Psoas muscle (tissue), 8 donors: ENCODE measurements at regions of chr12 and their contacts with region 1.

Region 1: DNA sequence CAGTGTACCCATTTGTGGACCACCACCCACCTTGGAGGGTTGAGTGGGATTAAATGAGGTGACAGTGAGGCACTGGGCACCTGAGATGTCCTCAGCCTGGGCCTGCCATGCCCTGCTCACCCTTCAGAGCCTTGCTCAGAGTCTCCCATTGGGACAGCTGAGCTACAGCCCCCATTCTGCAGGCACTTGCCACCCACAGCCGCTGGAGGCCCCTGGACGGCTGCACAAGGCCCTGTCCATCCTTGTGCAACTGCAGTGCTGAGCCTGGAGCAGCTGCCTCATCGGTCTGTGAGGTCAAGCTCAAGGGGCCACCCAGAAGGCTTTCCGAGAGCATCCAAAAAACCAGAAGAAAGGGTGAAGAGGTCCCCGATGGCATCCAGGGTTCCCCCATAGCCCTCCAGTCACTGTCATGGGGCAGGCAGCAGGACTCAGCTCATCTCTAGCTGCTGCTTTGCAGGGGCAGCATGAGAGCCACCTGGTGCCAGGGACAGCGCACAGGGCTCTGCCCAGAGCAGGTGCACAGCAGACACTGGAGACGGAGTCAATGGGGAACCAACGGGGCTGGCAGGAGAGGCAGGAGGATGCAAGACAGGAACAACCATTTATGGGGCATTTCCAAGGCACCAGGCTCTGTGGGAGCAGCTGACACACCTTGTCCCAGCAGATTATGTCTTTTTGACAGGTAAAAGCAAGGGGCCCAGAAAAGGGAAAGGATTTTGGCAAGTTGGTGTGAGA is 84.6 kb downstream of the ARL6IP4 start:
- DNase-seq: peak in 1 of 2 donors; percentile 57
- ATAC-seq: peak; percentile 23 to 40 (median 31)
- H3K4me3 ChIP-seq: no peak overlapping the region
- H3K27ac ChIP-seq: peak overlapping the region; percentile 95
- H3K4me1 ChIP-seq: peaks cover 83% of the 10 kb centered on the region
- H3K27me3 ChIP-seq: no peaks in the 10 kb centered on the region
- CTCF ChIP-seq: no peak

Region 2: GRCh38 chr12:123097561-123098084 is 32.6 kb after region 1 on chr12:
- intact Hi-C with region 1: loop called in 1 of 2 experiments (anchors 2 kb)
- DNase-seq: peak; percentile 77 to 92
- ATAC-seq: peak; percentile 85 to 89 (median 89)
- H3K4me3 ChIP-seq: no peak overlapping the region
- H3K27ac ChIP-seq: peak overlapping the region; percentile 80
- H3K4me1 ChIP-seq: peaks cover 69% of the 10 kb centered on the region
- H3K27me3 ChIP-seq: no peaks in the 10 kb centered on the region
- CTCF ChIP-seq: no peak